SK-N-SH (cell line): ENCODE measurements at regions of chr14 and their contacts with region 1.

Region 1: DNA sequence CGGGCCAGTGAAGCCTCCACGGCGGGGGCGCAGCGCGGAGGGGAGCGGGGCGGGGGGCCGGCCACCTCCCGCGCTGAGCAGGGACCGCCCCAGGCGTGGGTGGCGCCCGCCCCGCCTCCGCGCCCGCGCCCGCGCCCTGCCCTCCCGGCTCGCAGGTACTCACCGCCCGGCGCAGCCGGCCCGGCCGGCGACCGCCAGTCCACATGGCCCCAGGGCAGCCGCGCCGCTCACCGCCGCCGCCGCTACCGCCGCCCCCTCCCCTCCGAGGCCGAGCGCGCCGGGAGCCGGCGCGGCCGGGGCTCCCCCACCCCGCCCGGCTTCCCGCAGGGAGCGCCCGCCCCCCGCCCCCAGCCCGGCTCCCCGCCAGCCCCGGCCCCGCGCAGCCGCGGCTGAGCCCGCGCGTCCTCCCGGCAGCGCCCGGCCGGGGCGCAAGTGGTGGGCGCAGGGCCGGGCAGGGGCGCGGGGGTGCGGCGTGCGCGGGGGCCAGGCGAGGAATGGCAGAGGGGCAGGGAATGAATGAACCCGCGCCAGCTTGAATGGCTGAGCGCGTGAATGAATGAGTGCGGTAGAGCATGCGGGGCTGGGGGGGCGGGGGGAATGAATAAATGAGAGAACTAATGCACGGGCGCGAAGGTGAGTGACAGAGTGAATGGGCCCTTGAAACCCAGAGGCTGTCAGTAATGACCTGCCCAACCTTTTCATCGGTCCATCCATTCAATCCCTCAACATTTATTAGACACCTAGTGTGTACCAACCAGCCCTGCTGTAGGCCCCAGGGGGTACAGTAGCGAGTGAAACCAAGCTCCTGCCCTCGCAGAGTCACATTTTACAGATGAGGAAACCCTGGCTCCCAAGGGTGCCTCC is at the start of gene BEGAIN:
- DNase-seq: peak; percentile 91
- H3K4me3 ChIP-seq: peak within 1 kb of the TSS; percentile 60 to 61
- H3K27ac ChIP-seq: peak within 1 kb of the TSS in 1 of 2 experiments; percentile 91; a peak in 2 of 4 replicates
- H3K4me1 ChIP-seq: peaks cover 4 to 42% of the 10 kb centered on the region in 2 experiments; a peak in 3 of 4 replicates
- H3K27me3 ChIP-seq: peaks cover 4% of the 10 kb centered on the region; the same call in 1 of the 2 replicates
- CTCF ChIP-seq: no peak
- EP300 ChIP-seq: no peak
- RAD21 ChIP-seq: no peak
- polyA plus RNA-seq, gene BEGAIN: 4.2 and 4.4 TPM in 2 replicates

Region 2: DNA sequence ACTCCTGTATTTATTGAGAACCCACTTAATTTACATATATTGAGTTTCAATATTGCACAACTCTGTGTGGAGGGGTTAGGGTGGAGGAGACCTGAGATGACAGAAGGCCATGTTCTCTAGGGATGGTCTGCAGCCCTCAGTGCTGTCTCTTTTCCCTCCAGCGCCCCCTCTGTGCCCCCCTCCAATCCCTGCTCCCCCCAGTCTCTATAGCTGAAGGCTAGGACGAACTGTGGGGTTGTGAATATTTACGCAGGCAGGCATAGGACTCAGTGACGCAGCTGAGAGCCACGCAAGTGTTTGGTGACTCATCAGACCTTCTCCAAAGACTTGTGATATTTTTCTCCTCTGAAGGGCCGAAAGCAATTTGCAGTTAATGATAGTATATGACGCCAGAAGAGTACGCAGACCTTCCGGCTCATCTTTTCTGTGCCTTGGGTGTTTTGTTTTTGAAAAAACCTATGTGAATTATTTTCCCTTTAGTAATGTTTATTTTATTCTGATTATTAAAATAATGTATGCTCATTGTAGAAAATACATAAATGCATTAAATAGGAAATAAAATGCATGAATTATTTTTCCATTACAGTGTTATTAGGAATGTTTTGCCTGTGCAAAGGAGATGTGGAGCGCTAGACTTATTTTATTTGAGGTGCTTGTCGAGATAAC is 178.8 kb before region 1 on chr14:
- CTCF ChIA-PET with region 1: no interaction called
- POLR2A ChIA-PET with region 1: no interaction called
- DNase-seq: no peak
- H3K4me3 ChIP-seq: no peak overlapping the region
- H3K27ac ChIP-seq: peak overlapping the region; percentile 13 to 84; a peak in 3 of 4 replicates
- H3K4me1 ChIP-seq: peaks cover 0 to 59% of the 10 kb centered on the region in 2 experiments; a peak in 3 of 4 replicates
- H3K27me3 ChIP-seq: no peaks in the 10 kb centered on the region
- CTCF ChIP-seq: no peak
- EP300 ChIP-seq: no peak
- RAD21 ChIP-seq: no peak

Region 3: DNA sequence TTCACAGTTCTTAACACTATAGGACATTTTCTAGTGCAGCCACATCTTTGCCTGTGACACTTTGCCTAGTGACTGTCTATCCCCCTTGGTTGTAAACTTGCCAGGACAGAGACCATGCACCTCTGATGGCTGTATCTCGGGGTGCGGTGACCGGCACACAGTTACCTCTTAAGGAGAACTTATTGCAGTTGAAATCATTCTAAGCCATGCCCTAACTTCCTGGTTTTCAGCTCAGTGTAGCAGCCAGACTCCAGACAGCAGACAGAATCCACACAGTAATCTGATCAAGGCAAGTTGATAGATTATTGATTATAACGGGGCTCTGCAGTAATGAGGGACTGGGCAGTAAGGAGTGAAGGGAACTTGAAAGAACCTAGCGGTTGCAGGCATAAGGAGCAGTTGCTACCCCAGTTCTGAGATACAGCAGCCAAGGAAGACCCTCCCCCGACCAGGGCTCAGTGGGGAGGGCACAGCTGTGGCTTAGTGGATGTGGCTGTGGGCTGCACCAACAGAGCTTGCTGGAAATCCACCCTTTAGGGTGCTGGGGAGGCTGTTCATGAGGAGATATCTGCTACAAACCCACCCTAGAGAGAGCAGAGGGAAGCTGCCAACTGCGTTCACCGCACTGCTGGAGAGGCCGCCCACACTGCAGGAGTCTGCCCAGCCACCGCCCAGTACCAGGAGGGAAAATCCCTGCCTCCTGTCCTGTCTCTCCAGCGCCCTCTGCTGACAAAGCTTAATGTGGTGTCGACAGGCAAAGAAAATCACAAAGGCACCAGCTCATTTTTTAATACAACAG is 58.1 kb after region 1 on chr14:
- CTCF ChIA-PET with region 1: interaction called, 13 read pairs
- POLR2A ChIA-PET with region 1: no interaction called
- DNase-seq: peak; percentile 84
- H3K4me3 ChIP-seq: peak overlapping the region in 1 of 2 experiments; percentile 39; a peak in 1 of 4 replicates
- H3K27ac ChIP-seq: peak overlapping the region in 1 of 2 experiments; percentile 76; a peak in 2 of 4 replicates
- H3K4me1 ChIP-seq: peaks cover 5 to 34% of the 10 kb centered on the region in 2 experiments; a peak in 2 of 4 replicates
- H3K27me3 ChIP-seq: no peaks in the 10 kb centered on the region
- CTCF ChIP-seq: peak; percentile 53
- EP300 ChIP-seq: no peak
- RAD21 ChIP-seq: peak; percentile 86

Region 4: GRCh38 chr14:100738269-100738691 is 151.0 kb after region 1 on chr14:
- CTCF ChIA-PET with region 1: no interaction called
- POLR2A ChIA-PET with region 1: no interaction called
- DNase-seq: peak; percentile 44
- H3K4me3 ChIP-seq: no peak overlapping the region
- H3K27ac ChIP-seq: peak overlapping the region in 1 of 2 experiments; percentile 62; a peak in 2 of 4 replicates
- H3K4me1 ChIP-seq: peaks cover 0 to 22% of the 10 kb centered on the region in 2 experiments; a peak in 1 of 4 replicates
- H3K27me3 ChIP-seq: no peaks in the 10 kb centered on the region
- CTCF ChIP-seq: no peak
- EP300 ChIP-seq: no peak
- RAD21 ChIP-seq: no peak

Region 5: DNA sequence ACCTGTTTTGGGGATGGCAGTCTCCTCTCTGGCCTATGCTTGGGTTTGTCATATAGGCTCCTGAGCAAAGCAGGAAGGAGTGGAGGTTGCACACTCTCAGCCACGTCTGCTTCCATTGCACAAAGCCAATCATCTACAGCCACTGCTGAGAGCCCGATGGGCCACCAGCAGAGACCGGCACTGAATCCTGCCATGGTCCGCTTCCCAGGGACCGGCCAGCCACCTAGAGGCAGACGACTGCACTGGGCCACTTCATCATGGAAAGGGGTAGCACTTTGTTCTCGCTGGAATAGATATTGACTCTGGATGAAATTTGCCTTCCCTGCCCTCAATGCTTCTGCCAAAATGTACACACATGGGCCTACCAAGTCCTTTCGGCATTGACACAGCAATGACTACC is 161.6 kb after region 1 on chr14:
- CTCF ChIA-PET with region 1: no interaction called
- POLR2A ChIA-PET with region 1: no interaction called
- DNase-seq: no peak
- H3K4me3 ChIP-seq: no peak overlapping the region
- H3K27ac ChIP-seq: no peak overlapping the region
- H3K4me1 ChIP-seq: peaks cover 0 to 2% of the 10 kb centered on the region in 2 experiments; a peak in 1 of 4 replicates
- H3K27me3 ChIP-seq: no peaks in the 10 kb centered on the region
- CTCF ChIP-seq: no peak
- EP300 ChIP-seq: no peak
- RAD21 ChIP-seq: no peak